PC-3 (cell line): ENCODE measurements at regions of chr2 and their contacts with region 1.

Region 1: GRCh38 chr2:203814661-203815540 is 52.7 kb upstream of the CTLA4 start:
- DNase-seq: peak; percentile 77
- ATAC-seq: peak; percentile 64
- H3K4me3 ChIP-seq: peak overlapping the region; percentile 58; the same call in 1 of the 2 replicates
- H3K27ac ChIP-seq: no peak overlapping the region
- H3K4me1 ChIP-seq: peaks cover 28% of the 10 kb centered on the region
- H3K27me3 ChIP-seq: no peaks in the 10 kb centered on the region
- CTCF ChIP-seq: peak; percentile 84

Region 2: DNA sequence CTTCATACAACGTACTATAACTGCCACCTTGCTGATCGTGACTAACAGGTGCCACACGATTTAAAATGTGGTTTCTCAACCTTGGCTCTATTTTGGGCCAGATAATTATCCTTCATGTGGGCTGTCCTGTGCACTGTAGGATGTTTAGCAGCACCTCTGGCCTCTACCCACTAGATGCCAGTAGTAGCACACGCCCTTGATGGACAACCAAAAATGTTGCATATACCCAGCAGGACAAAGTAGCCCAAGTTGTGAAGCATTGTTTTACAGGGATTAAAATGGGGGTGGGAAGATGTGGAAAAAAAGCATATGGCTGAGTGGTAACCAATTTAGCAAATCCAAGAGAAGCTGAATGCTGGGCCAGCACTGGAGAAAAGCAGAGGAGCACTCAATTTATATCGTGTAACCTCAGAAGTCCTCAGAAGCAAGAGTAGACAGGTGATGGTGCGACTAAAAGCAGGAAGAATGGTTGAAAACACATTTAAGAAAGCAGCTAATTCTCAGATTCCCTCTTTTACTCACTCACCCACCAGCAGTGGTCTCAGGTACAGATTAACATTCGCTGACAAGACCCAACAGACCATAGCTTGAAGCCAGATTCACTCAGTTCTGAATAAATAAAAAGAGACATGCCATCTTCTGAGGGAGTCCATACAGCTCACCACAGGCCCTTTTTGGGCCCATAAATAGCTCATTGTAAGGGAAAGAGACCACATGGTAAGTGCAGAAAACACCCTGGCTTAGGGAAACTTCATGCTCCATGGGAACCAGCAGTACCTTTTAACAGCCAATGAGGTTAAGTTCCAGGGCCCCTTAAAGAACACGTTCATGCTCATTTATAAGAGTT is 330.4 kb before region 1 on chr2:
- CTCF ChIA-PET with region 1: interaction called, 4 read pairs
- POLR2A ChIA-PET with region 1: no interaction called
- intact Hi-C with region 1: loop called (anchors 1 kb)
- DNase-seq: peak; percentile 72
- ATAC-seq: peak; percentile 98
- H3K4me3 ChIP-seq: no peak overlapping the region
- H3K27ac ChIP-seq: no peak overlapping the region
- H3K4me1 ChIP-seq: no peaks in the 10 kb centered on the region; the same call in 1 of the 2 replicates
- H3K27me3 ChIP-seq: no peaks in the 10 kb centered on the region
- CTCF ChIP-seq: peak; percentile 90

Region 3: GRCh38 chr2:203650860-203651613 is 163.9 kb before region 1 on chr2:
- CTCF ChIA-PET with region 1: interaction called, 4 read pairs
- POLR2A ChIA-PET with region 1: no interaction called
- intact Hi-C with region 1: loop called (anchors 1 kb)
- DNase-seq: peak; percentile 80
- ATAC-seq: peak; percentile 76
- H3K4me3 ChIP-seq: no peak overlapping the region
- H3K27ac ChIP-seq: no peak overlapping the region
- H3K4me1 ChIP-seq: peaks cover 32% of the 10 kb centered on the region
- H3K27me3 ChIP-seq: no peaks in the 10 kb centered on the region
- CTCF ChIP-seq: peak; percentile 78

Region 4: GRCh38 chr2:203740780-203741281 is 74.1 kb before region 1 on chr2:
- CTCF ChIA-PET with region 1: no interaction called
- POLR2A ChIA-PET with region 1: no interaction called
- intact Hi-C with region 1: no loop called
- DNase-seq: no peak
- ATAC-seq: no peak
- H3K4me3 ChIP-seq: no peak overlapping the region
- H3K27ac ChIP-seq: no peak overlapping the region
- H3K4me1 ChIP-seq: peaks cover 23% of the 10 kb centered on the region
- H3K27me3 ChIP-seq: no peaks in the 10 kb centered on the region
- CTCF ChIP-seq: no peak

Region 5: GRCh38 chr2:203782262-203782976 is 32.5 kb before region 1 on chr2:
- CTCF ChIA-PET with region 1: no interaction called
- POLR2A ChIA-PET with region 1: interaction called, 3 read pairs
- intact Hi-C with region 1: loop called (anchors 2 kb)
- DNase-seq: peak; percentile 88
- ATAC-seq: peak; percentile 93
- H3K4me3 ChIP-seq: no peak overlapping the region
- H3K27ac ChIP-seq: 0 out of 2 replicates have a peak overlapping the region, but pooled peaks have one; percentile 10
- H3K4me1 ChIP-seq: peaks cover 11% of the 10 kb centered on the region; the same call in 1 of the 2 replicates
- H3K27me3 ChIP-seq: no peaks in the 10 kb centered on the region
- CTCF ChIP-seq: peak; percentile 90

Region 6: DNA sequence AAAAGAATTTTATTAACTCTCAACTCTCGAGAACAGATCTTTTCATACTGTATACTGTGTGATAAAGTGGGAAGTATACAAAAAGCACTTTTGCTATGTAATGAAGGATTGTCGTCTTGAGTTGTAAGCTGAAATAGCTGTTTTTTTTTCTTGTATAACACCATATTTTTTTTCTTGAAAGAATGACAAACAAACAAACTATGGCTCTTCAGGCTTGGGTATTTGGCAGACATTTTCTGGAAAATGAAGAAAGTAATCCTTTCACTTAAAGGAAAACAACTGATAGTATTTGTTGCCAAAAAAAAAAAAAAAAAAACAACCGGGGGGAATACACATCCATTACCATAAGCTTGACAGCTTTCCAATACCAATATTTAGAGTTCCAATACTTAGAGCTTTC is 352.1 kb after region 1 on chr2:
- CTCF ChIA-PET with region 1: no interaction called
- POLR2A ChIA-PET with region 1: no interaction called
- intact Hi-C with region 1: no loop called
- DNase-seq: no peak
- ATAC-seq: no peak
- H3K4me3 ChIP-seq: no peak overlapping the region
- H3K27ac ChIP-seq: no peak overlapping the region
- H3K4me1 ChIP-seq: no peaks in the 10 kb centered on the region
- H3K27me3 ChIP-seq: peaks cover 52% of the 10 kb centered on the region
- CTCF ChIP-seq: no peak

Region 7: GRCh38 chr2:204177977-204178540 is 363.2 kb after region 1 on chr2:
- CTCF ChIA-PET with region 1: no interaction called
- POLR2A ChIA-PET with region 1: no interaction called
- intact Hi-C with region 1: no loop called
- DNase-seq: peak; percentile 47
- ATAC-seq: no peak
- H3K4me3 ChIP-seq: no peak overlapping the region
- H3K27ac ChIP-seq: no peak overlapping the region
- H3K4me1 ChIP-seq: no peaks in the 10 kb centered on the region; the same call in 1 of the 2 replicates
- H3K27me3 ChIP-seq: peaks cover 32% of the 10 kb centered on the region
- CTCF ChIP-seq: peak; percentile 79

Region 8: DNA sequence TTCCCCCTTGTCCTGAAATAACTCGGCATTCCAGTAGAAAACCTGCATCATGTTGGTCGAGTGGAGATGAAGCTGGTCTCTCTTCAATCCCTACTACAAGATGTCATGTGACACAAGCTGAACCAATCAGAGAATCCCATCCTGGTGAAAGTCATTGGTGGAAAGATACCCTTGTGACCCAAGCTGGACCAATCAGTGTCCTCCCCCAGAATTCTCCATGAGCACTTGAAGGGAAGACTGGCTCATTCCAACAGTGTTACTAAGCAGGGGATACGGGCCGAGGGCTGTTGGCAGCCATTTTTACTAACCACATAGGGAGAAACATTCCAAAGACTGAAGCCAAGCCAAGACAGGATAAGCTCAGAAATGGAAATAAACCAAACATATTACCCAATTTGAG is 420.0 kb after region 1 on chr2:
- CTCF ChIA-PET with region 1: no interaction called
- POLR2A ChIA-PET with region 1: no interaction called
- intact Hi-C with region 1: no loop called
- DNase-seq: no peak
- ATAC-seq: no peak
- H3K4me3 ChIP-seq: no peak overlapping the region
- H3K27ac ChIP-seq: no peak overlapping the region
- H3K4me1 ChIP-seq: no peaks in the 10 kb centered on the region
- H3K27me3 ChIP-seq: peaks cover 77% of the 10 kb centered on the region
- CTCF ChIP-seq: no peak